Naive thymus-derived CD4-positive, alpha-beta T cell (primary cell): ENCODE measurements at regions of chr21 and their contacts with region 1.

Region 1: GRCh38 chr21:32569261-32570230 is 15.8 kb downstream of the TCP10L start:
- DNase-seq: peak; percentile 56 to 80 (median 75)
- ATAC-seq: peak; percentile 96
- H3K4me3 ChIP-seq: peak overlapping the region; percentile 85
- H3K4me3 Mint-ChIP-seq: peak overlapping the region; percentile 82 to 95 (median 90)
- H3K27ac ChIP-seq: peak overlapping the region; percentile 65
- H3K27ac Mint-ChIP-seq: peak overlapping the region; percentile 46 to 90 (median 75)
- H3K4me1 ChIP-seq: peaks cover 5 to 7% of the 10 kb centered on the region in 2 donors
- H3K4me1 Mint-ChIP-seq: peaks cover 6 to 20% (median 17%) of the 10 kb centered on the region in 7 donors
- H3K27me3 ChIP-seq: no peaks in the 10 kb centered on the region
- H3K27me3 Mint-ChIP-seq: peaks cover 0 to 8% (median 0%) of the 10 kb centered on the region in 5 donors

Region 2: GRCh38 chr21:31781737-31782136 is 787.8 kb before region 1 on chr21:
- CTCF ChIA-PET with region 1: no interaction called
- POLR2A ChIA-PET with region 1: no interaction called
- intact Hi-C with region 1: loop called in 1 of 2 experiments (anchors 10 kb)
- DNase-seq: no peak
- ATAC-seq: no peak
- H3K4me3 ChIP-seq: no peak overlapping the region
- H3K4me3 Mint-ChIP-seq: no peak overlapping the region
- H3K27ac ChIP-seq: no peak overlapping the region
- H3K27ac Mint-ChIP-seq: no peak overlapping the region
- H3K4me1 ChIP-seq: no peaks in the 10 kb centered on the region
- H3K4me1 Mint-ChIP-seq: peaks cover 3 to 11% (median 4%) of the 10 kb centered on the region in 7 donors
- H3K27me3 ChIP-seq: no peaks in the 10 kb centered on the region
- H3K27me3 Mint-ChIP-seq: peaks cover 0 to 17% (median 13%) of the 10 kb centered on the region in 5 donors

Region 3: DNA sequence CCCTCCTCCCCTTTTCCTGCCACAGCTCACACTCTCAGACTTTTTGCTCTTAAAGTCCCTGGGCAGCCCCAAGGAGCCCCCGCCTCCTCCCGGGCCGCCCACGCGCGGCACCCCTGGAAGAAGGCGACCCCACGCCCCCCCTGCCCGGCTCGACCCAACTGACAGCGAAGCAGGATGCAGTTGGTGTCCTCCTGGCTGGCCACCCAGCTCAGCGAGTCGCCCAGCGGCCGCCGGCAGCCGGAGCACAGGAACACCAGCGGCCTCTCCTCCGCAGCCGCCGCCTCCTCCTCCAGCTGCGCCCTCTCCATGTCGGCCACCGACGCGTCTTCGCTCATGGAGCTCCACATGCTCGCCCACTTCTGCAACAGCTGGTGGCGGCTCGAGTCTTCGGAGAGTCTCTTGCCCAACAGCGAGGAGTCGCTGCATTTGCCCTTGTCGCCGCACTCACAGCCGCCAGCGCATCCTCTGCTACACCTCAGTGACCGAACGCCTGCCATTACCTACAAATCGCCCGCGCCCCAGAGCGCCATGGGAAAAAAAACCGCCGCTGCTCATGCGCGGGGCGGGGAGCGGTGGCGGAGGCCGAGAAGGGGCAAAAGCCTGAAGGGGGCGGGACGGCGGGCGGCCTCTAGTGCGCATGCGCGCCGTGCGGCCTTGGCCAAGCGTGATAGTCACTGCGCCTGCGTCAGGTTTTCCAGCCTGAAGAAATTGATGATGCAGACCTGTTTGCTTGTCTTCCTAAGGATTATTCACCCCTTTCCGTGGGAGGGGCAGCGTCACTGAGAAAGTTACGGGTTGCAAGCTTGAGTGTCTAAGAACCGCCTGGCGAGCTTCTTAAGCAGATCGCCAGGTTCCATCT is 290.8 kb before region 1 on chr21 and contains the start of gene MIS18A:
- CTCF ChIA-PET with region 1: no interaction called
- POLR2A ChIA-PET with region 1: no interaction called
- intact Hi-C with region 1: loop called in 1 of 2 experiments (anchors 2 kb)
- DNase-seq: peak; percentile 92 to 98 (median 95)
- ATAC-seq: peak; percentile 97
- H3K4me3 ChIP-seq: peak within 1 kb of the TSS; percentile 90
- H3K4me3 Mint-ChIP-seq: peak within 1 kb of the TSS; percentile 95 to 100 (median 98)
- H3K27ac ChIP-seq: peak within 1 kb of the TSS; percentile 70
- H3K27ac Mint-ChIP-seq: peak within 1 kb of the TSS; percentile 90 to 97 (median 94)
- H3K4me1 ChIP-seq: peaks cover 14 to 16% of the 10 kb centered on the region in 2 donors
- H3K4me1 Mint-ChIP-seq: peaks cover 8 to 36% (median 33%) of the 10 kb centered on the region in 7 donors
- H3K27me3 ChIP-seq: no peaks in the 10 kb centered on the region
- H3K27me3 Mint-ChIP-seq: no peaks in the 10 kb centered on the region
- total RNA-seq, gene MIS18A: 3.3 to 16.4 (median 8.4) TPM

Region 4: GRCh38 chr21:32403201-32403777 is 166.3 kb before region 1 on chr21:
- CTCF ChIA-PET with region 1: interaction called, 11 read pairs
- POLR2A ChIA-PET with region 1: interaction called, 3 read pairs
- intact Hi-C with region 1: loop called (anchors 1 kb)
- DNase-seq: peak in 7 of 9 donors; percentile 43 to 54 (median 50)
- ATAC-seq: peak; percentile 87
- H3K4me3 ChIP-seq: no peak overlapping the region
- H3K4me3 Mint-ChIP-seq: no peak overlapping the region
- H3K27ac ChIP-seq: no peak overlapping the region
- H3K27ac Mint-ChIP-seq: no peak overlapping the region
- H3K4me1 ChIP-seq: peaks cover 0 to 4% of the 10 kb centered on the region in 2 donors
- H3K4me1 Mint-ChIP-seq: peaks cover 0 to 17% (median 0%) of the 10 kb centered on the region in 7 donors
- H3K27me3 ChIP-seq: no peaks in the 10 kb centered on the region
- H3K27me3 Mint-ChIP-seq: peaks cover 0 to 17% (median 12%) of the 10 kb centered on the region in 5 donors

Region 5: DNA sequence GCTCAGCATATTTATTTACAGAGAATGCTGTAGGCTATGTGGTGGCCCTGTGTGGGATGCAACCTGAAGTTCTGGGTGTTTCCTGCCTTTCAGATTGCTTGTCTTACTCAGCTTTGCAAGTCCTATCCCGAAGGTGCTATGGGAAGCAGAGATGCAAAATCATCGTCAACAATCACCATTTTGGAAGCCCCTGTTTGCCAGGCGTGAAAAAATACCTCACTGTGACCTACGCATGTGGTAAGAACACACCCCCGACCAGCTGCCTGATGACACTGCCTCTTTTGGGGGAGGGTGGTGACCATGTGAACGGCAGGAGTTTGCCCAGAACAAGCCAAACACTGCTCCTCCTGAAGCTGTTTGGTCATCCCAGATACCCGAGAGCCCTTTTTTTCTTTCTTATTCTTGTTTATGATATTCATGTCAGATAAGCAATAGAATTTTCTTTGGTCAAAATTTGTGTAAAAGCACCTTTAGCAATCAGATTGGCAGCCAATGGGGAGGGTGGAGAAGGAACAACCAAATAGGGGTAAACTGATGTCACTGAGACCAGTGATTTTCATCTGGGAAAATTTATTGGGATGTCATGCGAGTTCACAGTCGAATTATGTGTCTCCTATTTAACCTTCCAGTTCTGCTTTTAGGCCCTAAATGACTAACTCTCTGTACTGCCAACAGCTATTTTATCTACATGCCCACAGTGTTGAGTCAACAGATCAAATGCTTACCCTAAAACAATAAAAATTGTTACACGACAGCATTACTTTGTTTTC is 74.4 kb before region 1 on chr21:
- CTCF ChIA-PET with region 1: no interaction called
- POLR2A ChIA-PET with region 1: no interaction called
- intact Hi-C with region 1: loop called in 1 of 2 experiments (anchors 2 kb)
- DNase-seq: no peak
- ATAC-seq: no peak
- H3K4me3 ChIP-seq: no peak overlapping the region
- H3K4me3 Mint-ChIP-seq: no peak overlapping the region
- H3K27ac ChIP-seq: no peak overlapping the region
- H3K27ac Mint-ChIP-seq: peak overlapping the region in 2 of 9 donors; percentile 4 to 17
- H3K4me1 ChIP-seq: peaks cover 0 to 16% of the 10 kb centered on the region in 2 donors
- H3K4me1 Mint-ChIP-seq: peaks cover 0 to 10% (median 5%) of the 10 kb centered on the region in 7 donors
- H3K27me3 ChIP-seq: no peaks in the 10 kb centered on the region
- H3K27me3 Mint-ChIP-seq: no peaks in the 10 kb centered on the region

Region 6: DNA sequence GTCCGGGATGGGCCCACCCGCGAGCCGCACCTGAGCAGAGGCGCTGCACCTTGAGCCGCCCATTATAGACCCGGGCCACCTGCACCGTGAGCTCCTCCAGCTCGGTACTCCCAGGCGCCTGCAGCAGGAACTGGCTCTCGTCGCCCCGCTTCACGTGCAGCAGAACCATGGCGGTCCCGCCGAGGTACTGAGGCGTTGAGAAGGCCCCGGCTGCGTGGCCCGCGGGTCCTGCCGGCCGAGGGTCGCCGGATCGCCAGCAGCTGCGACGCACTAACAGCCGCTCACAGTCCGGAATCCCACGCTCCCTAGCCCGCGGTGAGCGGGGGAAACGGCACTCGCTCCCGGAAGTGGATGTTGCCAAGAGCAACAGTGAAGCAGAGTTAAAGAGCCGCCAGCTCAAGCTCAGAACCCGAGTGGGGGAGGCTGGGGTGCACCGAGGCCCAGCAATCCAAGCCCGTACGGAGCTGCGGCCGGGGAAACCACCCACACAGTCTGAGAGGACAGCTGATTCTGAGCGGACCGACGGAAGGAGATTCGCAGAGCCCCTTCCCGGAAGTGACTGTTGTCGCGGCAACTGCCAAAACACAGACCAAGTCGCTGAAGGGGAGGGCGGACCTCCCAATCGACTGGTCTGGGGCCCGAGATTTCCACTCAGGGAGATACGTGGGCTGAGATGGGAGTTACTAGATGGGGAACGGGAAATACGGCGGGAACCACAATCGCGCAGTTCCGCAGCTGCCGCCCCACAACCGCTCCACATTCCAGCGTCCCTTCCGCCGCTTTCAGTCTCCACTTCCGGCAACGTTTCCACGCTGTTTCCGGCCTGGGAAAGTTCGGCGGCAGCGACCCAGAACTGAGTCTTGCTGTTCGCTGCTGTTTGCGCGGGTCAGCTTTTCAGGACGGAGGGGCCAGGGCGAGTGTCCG is 42.8 kb after region 1 on chr21 and contains the start of gene CFAP298:
- CTCF ChIA-PET with region 1: no interaction called
- POLR2A ChIA-PET with region 1: interaction called, 5 read pairs
- intact Hi-C with region 1: loop called in 1 of 2 experiments (anchors 2 kb)
- DNase-seq: peak; percentile 78 to 93 (median 89)
- ATAC-seq: peak; percentile 97
- H3K4me3 ChIP-seq: peak within 1 kb of the TSS; percentile 100
- H3K4me3 Mint-ChIP-seq: peak within 1 kb of the TSS; percentile 95 to 98 (median 97)
- H3K27ac ChIP-seq: peak within 1 kb of the TSS; percentile 87
- H3K27ac Mint-ChIP-seq: peak within 1 kb of the TSS; percentile 90 to 98 (median 97)
- H3K4me1 ChIP-seq: peaks cover 12% of the 10 kb centered on the region in 2 donors
- H3K4me1 Mint-ChIP-seq: peaks cover 0 to 34% (median 12%) of the 10 kb centered on the region in 7 donors
- H3K27me3 ChIP-seq: no peaks in the 10 kb centered on the region
- H3K27me3 Mint-ChIP-seq: peaks cover 0 to 15% (median 0%) of the 10 kb centered on the region in 5 donors
- total RNA-seq, gene CFAP298: 16.8 to 34.5 (median 31.3) TPM

Region 7: DNA sequence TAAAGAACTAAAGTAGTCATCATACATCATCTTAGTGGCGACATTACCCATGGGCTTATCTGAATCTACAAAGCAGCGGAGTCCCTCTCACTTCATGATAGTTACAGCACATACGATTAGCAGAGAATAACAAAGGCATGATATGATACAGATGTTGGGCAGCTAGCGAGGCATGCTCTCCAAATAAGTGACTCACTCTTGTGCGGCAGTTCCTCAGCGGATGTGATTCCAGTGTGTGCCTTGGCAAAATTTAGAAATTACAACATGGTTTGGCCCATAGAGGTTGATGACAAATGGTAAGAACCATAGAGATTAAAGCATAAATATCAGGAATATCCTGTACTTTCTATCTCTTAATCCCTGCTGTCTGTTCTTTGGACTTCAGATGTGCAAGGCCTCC is 250.1 kb after region 1 on chr21:
- CTCF ChIA-PET with region 1: no interaction called
- POLR2A ChIA-PET with region 1: no interaction called
- intact Hi-C with region 1: no loop called
- DNase-seq: no peak
- ATAC-seq: no peak
- H3K4me3 ChIP-seq: no peak overlapping the region
- H3K4me3 Mint-ChIP-seq: no peak overlapping the region
- H3K27ac ChIP-seq: no peak overlapping the region
- H3K27ac Mint-ChIP-seq: no peak overlapping the region
- H3K4me1 ChIP-seq: no peaks in the 10 kb centered on the region
- H3K4me1 Mint-ChIP-seq: peaks cover 0 to 5% (median 0%) of the 10 kb centered on the region in 7 donors
- H3K27me3 ChIP-seq: no peaks in the 10 kb centered on the region
- H3K27me3 Mint-ChIP-seq: no peaks in the 10 kb centered on the region

Region 8: GRCh38 chr21:32978341-32979270 is 409.1 kb after region 1 on chr21:
- CTCF ChIA-PET with region 1: no interaction called
- POLR2A ChIA-PET with region 1: no interaction called
- intact Hi-C with region 1: no loop called
- DNase-seq: no peak
- ATAC-seq: no peak
- H3K4me3 ChIP-seq: no peak overlapping the region
- H3K4me3 Mint-ChIP-seq: no peak overlapping the region
- H3K27ac ChIP-seq: no peak overlapping the region
- H3K27ac Mint-ChIP-seq: no peak overlapping the region
- H3K4me1 ChIP-seq: no peaks in the 10 kb centered on the region
- H3K4me1 Mint-ChIP-seq: no peaks in the 10 kb centered on the region
- H3K27me3 ChIP-seq: peaks cover 0 to 3% of the 10 kb centered on the region in 2 donors
- H3K27me3 Mint-ChIP-seq: peaks cover 11 to 35% (median 16%) of the 10 kb centered on the region in 5 donors